ENCODE measurements at regions of chr4 and their contacts with region 1.

Region 1: DNA sequence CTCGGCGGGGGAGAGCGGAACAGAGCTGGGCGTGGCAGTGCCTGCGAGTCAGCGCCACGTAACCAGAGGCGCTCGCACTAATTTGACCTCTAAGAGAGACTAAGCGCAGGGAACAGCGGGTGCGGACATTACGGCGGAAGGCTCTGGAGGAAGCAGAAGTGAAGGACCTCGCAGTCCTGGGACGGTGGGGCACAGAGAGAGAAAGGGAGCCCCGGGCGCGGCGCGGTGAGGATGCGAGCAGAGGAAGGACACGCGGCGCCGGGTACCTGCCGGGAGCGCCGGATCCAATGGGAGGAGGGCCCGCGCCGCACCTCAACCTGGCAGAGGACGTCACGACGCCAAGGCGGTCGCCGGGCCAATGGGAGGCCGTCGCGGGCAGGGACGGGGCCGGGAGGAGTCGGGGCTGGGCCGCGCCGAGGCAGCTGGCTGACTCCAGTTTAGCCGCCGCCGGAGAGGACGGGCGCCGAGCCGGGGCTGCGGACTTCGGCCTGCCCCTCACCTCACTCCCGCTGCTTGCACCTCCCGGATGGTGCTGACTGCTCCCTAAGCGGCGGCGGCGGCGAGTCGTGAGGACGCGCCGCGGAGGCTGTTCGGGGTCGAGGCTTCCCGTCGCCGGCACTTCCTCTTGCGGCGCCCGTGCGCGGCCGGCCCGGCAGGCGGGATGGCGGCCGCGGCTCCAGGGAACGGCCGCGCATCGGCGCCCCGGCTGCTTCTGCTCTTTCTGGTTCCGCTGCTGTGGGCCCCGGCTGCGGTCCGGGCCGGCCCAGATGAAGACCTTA is at the start of gene TMEM165:
- DNase-seq: peak; percentile 94 to 96 (median 95)
- ATAC-seq: peak; percentile 97
- H3K4me3 ChIP-seq: peak within 1 kb of the TSS; percentile 98 to 99
- H3K27ac ChIP-seq: peak within 1 kb of the TSS; percentile 95 to 100 (median 97)
- H3K4me1 ChIP-seq: peaks cover 29% of the 10 kb centered on the region
- H3K27me3 ChIP-seq: no peaks in the 10 kb centered on the region
- CTCF ChIP-seq: peak in 2 of 7 experiments; percentile 2 to 17
- POLR2A ChIP-seq: peak; percentile 98 to 99 (median 98)
- total RNA-seq, gene TMEM165: 90.5 to 308 TPM

Region 2: GRCh38 chr4:55345980-55346850 is 49.5 kb before region 1 on chr4 and contains the start of gene SRD5A3:
- intact Hi-C with region 1: loop called (anchors 10 kb)
- DNase-seq: peak; percentile 83 to 90 (median 86)
- ATAC-seq: peak; percentile 94
- H3K4me3 ChIP-seq: peak within 1 kb of the TSS; percentile 29 to 68
- H3K27ac ChIP-seq: peak within 1 kb of the TSS; percentile 89 to 98 (median 94)
- H3K4me1 ChIP-seq: peaks cover 22% of the 10 kb centered on the region
- H3K27me3 ChIP-seq: no peaks in the 10 kb centered on the region
- CTCF ChIP-seq: peak; percentile 87 to 99 (median 95)
- POLR2A ChIP-seq: peak; percentile 56 to 64 (median 60)
- total RNA-seq, gene SRD5A3: 6.7 to 11.5 TPM